ENCODE measurements at regions of chr19 and their contacts with region 1.

Region 1: DNA sequence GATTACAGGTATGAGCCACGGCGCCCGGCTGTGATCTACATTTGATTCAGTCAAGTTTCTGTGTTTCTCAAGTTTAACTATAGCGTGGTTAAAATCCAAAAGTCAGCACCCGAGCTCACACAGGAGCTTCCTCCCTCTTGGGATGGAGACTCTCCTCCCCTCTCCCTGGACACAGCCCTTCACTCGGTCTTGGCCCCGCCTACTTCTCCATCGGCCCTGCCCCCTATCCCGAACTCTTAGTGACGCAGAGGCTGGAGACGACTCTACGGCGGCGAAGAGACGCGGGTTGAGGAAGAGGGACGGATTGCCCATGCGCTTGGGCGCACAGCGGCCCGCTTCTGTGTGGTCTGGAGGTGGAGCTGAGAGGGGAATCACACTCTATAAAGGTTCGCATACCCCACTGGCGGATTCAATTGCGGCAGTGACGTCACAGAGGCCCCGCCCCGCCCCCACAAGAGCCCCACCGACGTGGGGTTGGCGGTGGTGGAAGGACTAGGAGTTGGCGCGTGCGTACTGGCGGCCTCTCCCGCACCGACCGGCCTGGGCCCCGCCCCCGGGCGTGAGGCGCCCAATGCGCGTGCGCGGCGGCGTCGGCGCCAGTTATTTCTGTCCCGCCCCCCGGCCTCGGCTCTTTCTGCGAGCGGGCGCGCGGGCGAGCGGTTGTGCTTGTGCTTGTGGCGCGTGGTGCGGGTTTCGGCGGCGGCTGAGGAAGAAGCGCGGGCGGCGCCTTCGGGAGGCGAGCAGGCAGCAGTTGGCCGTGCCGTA is at the start of gene TRIM28:
- DNase-seq: peak; percentile 99
- ATAC-seq: peak; percentile 96
- H3K4me3 ChIP-seq: peak within 1 kb of the TSS; percentile 92
- H3K27ac ChIP-seq: peak within 1 kb of the TSS; percentile 88
- H3K4me1 ChIP-seq: peaks cover 13% of the 10 kb centered on the region
- H3K27me3 ChIP-seq: no peaks in the 10 kb centered on the region
- CTCF ChIP-seq: no peak
- total RNA-seq, gene TRIM28: 1,169 and 1,653 TPM in 2 replicates

Region 2: GRCh38 chr19:58386576-58387337 is 157.3 kb before region 1 on chr19 and contains the start of gene RPS5:
- CTCF ChIA-PET with region 1: no interaction called
- POLR2A ChIA-PET with region 1: no interaction called
- intact Hi-C with region 1: loop called (anchors 1 kb)
- DNase-seq: peak; percentile 100
- ATAC-seq: peak; percentile 87
- H3K4me3 ChIP-seq: peak within 1 kb of the TSS; percentile 96
- H3K27ac ChIP-seq: peak within 1 kb of the TSS; percentile 86
- H3K4me1 ChIP-seq: peaks cover 34% of the 10 kb centered on the region
- H3K27me3 ChIP-seq: no peaks in the 10 kb centered on the region
- CTCF ChIP-seq: no peak
- total RNA-seq, gene RPS5: 3,515 and 3,776 TPM in 2 replicates

Measured in PC-3 (cell line).